ENCODE measurements at regions of chr12 and their contacts with region 1.

Region 1: DNA sequence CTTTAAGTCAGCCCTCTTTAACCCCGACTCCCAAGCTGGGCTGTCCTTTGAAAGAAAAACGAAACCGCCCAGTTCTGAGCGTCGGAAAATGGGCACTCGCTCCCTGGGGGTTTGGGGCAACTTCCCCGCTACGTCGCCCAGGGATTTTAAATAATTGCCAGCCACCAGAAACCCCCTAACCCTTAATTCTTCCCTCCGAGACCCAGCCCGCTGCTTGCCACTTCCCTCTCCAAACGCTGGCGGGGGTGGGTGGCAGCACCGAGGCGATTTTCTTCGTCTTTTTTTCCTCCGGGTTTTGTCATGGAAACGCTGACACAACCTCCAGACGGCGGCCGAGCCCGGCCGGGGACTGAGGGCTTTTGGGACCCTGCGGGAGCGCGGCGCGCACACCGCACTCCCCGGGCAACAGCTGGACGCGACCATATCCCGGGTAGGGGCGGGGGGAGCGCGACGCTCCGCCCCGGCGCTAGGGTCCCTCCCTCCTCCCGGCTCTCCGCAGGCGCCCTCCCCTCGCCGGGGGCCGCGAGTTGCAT is at the start of gene CHST11:
- DNase-seq: peak; percentile 41 to 76 (median 60)
- ATAC-seq: peak; percentile 60 to 71
- H3K4me3 Mint-ChIP-seq: peak within 1 kb of the TSS; percentile 93 to 100 (median 98)
- H3K27ac Mint-ChIP-seq: peak within 1 kb of the TSS; percentile 88 to 98 (median 95)
- H3K4me1 Mint-ChIP-seq: peaks cover 9 to 51% (median 42%) of the 10 kb centered on the region in 4 donors
- H3K27me3 Mint-ChIP-seq: no peaks in the 10 kb centered on the region
- polyA plus RNA-seq, gene CHST11: 23.1 to 35.6 (median 26.1) TPM

Region 2: DNA sequence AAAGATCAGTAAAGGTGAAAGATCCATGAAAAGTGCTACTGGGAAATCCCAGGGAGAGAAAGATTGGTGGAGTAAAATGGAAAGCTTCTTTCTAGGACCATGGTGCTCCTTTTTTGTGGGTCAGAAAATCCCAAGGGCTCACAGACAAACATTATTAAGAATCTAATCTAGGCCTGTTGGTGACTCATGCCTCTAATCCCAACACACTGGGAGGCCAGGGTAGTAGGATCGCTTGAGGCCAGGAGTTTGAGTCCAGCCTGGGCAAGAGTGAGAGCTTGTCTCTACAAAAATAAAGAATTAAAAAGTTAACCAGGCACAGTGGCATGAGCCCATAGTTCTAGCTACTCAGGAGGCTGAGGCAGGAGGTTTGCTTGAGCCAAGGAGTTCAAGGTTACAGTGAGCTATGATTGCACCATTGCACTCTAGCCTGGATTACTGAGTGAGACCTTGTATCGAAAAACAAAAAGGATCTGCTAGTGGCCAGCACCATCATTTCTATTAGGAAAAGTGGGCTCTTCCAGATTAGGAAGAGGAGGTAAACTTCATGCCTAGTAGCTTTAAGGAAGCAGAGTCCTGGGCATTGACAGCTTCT is 197.9 kb before region 1 on chr12:
- POLR2A ChIA-PET with region 1: no interaction called
- DNase-seq: no peak
- ATAC-seq: no peak
- H3K4me3 Mint-ChIP-seq: no peak overlapping the region
- H3K27ac Mint-ChIP-seq: peak overlapping the region in 1 of 10 donors; percentile 5
- H3K4me1 Mint-ChIP-seq: peaks cover 0 to 3% (median 0%) of the 10 kb centered on the region in 4 donors
- H3K27me3 Mint-ChIP-seq: no peaks in the 10 kb centered on the region

Region 3: DNA sequence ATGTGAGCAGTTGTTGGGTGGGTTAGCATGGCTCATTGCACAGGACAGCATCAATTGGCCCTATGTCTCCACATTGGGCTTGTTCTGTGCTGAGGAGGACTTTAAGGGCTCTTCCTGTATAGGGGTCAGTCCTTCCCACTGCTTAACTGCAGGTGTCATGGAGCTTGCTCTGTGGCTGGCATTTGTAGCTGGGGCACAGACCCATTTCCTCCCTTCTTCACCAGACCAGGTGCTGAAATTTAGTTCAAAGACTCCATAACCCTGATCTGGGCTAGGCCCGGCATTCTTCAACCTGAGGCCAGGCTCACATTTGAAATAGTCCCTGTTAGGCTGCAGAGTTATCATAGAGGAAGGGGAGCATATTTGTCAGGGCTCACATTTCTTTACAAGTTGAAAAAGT is 13.0 kb after region 1 on chr12:
- POLR2A ChIA-PET with region 1: interaction called, 10 read pairs
- DNase-seq: no peak
- ATAC-seq: peak; percentile 15 to 18
- H3K4me3 Mint-ChIP-seq: peak overlapping the region in 7 of 10 donors; percentile 3 to 52 (median 27)
- H3K27ac Mint-ChIP-seq: peak overlapping the region in 8 of 10 donors; percentile 33 to 98 (median 71)
- H3K4me1 Mint-ChIP-seq: peaks cover 51 to 97% (median 92%) of the 10 kb centered on the region in 4 donors
- H3K27me3 Mint-ChIP-seq: no peaks in the 10 kb centered on the region

Region 4: DNA sequence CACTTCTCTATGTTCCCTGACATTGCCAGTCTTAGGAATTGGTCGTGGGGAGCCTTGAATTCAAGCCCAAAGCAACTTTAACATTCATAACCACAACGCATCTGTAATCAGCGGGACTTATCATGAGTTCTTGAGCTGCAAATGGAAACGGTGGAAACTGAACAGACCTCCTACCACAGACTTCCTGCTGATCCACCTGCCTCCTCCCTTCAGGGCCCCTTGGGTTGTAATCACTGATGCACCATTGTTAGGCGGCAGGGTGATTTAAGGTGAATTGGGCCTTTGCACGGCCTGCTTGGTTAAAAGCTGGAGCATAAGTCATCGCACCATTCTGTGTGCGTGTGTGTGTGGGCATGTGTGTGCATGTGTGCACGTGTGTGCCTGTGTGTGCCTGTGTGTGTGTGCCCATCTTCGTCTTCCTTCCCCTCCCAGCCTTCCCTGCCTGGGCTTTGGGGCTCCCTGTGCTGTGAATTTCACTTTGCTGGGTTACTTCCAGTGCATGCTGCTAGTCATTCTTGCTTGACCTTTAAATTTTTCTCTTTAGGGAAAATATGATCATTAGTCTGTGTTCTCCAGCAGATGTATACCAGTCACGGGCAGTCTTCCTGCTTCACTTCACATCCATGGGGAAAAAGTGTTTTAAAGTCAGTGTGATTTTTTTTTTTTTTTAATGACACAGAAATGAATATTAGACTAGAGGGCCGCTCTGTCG is 29.3 kb after region 1 on chr12:
- POLR2A ChIA-PET with region 1: interaction called, 25 read pairs
- DNase-seq: peak in 7 of 10 donors; percentile 21 to 77 (median 50)
- ATAC-seq: peak; percentile 93 to 95
- H3K4me3 Mint-ChIP-seq: peak overlapping the region; percentile 26 to 80 (median 69)
- H3K27ac Mint-ChIP-seq: peak overlapping the region; percentile 3 to 90 (median 82)
- H3K4me1 Mint-ChIP-seq: peaks cover 60 to 96% (median 88%) of the 10 kb centered on the region in 4 donors
- H3K27me3 Mint-ChIP-seq: no peaks in the 10 kb centered on the region